Esophagus muscularis mucosa (tissue), 4 donors: ENCODE measurements at regions of chr12 and their contacts with region 1.

Region 1: GRCh38 chr12:116882742-116883141 is 1.5 kb upstream of the HRK start:
- DNase-seq: no peak
- H3K4me3 ChIP-seq: no peak overlapping the region
- H3K27ac ChIP-seq: no peak overlapping the region
- H3K4me1 ChIP-seq: peaks cover 27 to 44% (median 43%) of the 10 kb centered on the region in 4 donors
- H3K27me3 ChIP-seq: peaks cover 11 to 87% (median 46%) of the 10 kb centered on the region in 4 donors
- CTCF ChIP-seq: peak in 1 of 3 experiments; percentile 33
- EP300 ChIP-seq: no peak
- POLR2A ChIP-seq: no peak

Region 2: GRCh38 chr12:116508145-116509121 is 374.3 kb before region 1 on chr12:
- intact Hi-C with region 1: no loop called
- DNase-seq: no peak
- H3K4me3 ChIP-seq: peak overlapping the region; percentile 51 to 55 (median 54)
- H3K27ac ChIP-seq: peak overlapping the region; percentile 65 to 83 (median 72)
- H3K4me1 ChIP-seq: peaks cover 3 to 14% (median 13%) of the 10 kb centered on the region in 4 donors
- H3K27me3 ChIP-seq: no peaks in the 10 kb centered on the region
- CTCF ChIP-seq: no peak
- EP300 ChIP-seq: no peak
- POLR2A ChIP-seq: no peak

Region 3: DNA sequence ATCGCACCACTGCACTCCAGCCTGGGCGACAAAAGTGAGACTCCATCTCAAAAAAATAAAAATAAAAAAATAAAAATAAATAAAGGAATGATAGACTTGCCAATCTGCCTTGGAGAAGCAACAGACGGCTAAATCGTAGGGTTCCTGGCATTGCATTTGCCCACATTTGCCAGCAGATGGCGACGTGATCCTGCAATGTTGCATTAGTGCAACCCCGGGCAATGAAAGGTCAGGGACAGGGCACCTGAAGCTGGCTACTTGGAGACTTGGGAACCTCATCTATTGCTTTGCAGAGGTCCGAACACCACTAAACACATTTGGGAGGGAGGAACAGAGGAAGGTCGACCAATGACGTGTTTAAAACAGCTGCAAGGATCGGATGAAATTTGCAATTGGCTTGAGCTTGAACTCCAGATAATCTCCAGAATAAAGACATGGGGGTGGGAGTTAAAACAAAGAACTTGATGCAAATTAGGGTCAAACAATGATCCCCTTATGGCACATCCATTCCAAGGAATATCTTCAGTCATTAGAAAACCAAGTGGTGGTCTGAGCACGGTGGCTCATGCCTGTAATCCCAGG is 179.4 kb before region 1 on chr12:
- intact Hi-C with region 1: loop called (anchors 2 kb)
- DNase-seq: no peak
- H3K4me3 ChIP-seq: no peak overlapping the region
- H3K27ac ChIP-seq: no peak overlapping the region
- H3K4me1 ChIP-seq: peaks cover 0 to 9% (median 3%) of the 10 kb centered on the region in 4 donors
- H3K27me3 ChIP-seq: no peaks in the 10 kb centered on the region
- CTCF ChIP-seq: peak; percentile 88 to 96 (median 91)
- EP300 ChIP-seq: no peak
- POLR2A ChIP-seq: no peak

Region 4: DNA sequence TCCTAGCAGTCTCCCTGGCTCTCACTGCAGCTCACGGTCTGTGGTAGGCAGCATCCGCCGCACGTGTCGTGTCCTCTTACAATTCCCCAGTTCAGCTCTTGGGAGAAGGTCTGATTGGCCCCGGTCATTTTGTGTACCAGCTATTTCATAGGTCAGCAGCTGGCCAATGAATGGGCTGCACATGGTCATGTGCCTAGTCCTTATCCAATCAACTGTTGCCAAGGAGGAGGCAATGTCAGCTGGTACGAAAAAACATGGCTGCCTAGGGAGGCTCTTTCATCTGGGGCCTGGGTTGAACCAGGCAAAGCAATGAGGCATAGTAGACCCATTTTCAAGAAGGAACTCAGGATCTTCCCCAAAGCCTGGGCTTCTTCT is 98.5 kb before region 1 on chr12:
- intact Hi-C with region 1: no loop called
- DNase-seq: no peak
- H3K4me3 ChIP-seq: no peak overlapping the region
- H3K27ac ChIP-seq: no peak overlapping the region
- H3K4me1 ChIP-seq: no peaks in the 10 kb centered on the region
- H3K27me3 ChIP-seq: no peaks in the 10 kb centered on the region
- CTCF ChIP-seq: no peak
- EP300 ChIP-seq: no peak
- POLR2A ChIP-seq: no peak